Activated CD8-positive, alpha-beta T cell treated with anti-CD3 and anti-CD28 coated beads, Interleukin-2, amount 10 ng/mL, durations not matched to agents 7 days and 5 days (primary cell): ENCODE measurements at regions of chr1 and their contacts with region 1.

Region 1: GRCh38 chr1:26417111-26417759 is 6.6 kb downstream of the LIN28A start:
- DNase-seq: peak; percentile 91
- ATAC-seq: peak; percentile 100
- H3K4me3 Mint-ChIP-seq: no peak overlapping the region
- H3K27ac Mint-ChIP-seq: no peak overlapping the region
- H3K4me1 Mint-ChIP-seq: peaks cover 7% of the 10 kb centered on the region
- H3K27me3 Mint-ChIP-seq: peaks cover 49% of the 10 kb centered on the region

Region 2: DNA sequence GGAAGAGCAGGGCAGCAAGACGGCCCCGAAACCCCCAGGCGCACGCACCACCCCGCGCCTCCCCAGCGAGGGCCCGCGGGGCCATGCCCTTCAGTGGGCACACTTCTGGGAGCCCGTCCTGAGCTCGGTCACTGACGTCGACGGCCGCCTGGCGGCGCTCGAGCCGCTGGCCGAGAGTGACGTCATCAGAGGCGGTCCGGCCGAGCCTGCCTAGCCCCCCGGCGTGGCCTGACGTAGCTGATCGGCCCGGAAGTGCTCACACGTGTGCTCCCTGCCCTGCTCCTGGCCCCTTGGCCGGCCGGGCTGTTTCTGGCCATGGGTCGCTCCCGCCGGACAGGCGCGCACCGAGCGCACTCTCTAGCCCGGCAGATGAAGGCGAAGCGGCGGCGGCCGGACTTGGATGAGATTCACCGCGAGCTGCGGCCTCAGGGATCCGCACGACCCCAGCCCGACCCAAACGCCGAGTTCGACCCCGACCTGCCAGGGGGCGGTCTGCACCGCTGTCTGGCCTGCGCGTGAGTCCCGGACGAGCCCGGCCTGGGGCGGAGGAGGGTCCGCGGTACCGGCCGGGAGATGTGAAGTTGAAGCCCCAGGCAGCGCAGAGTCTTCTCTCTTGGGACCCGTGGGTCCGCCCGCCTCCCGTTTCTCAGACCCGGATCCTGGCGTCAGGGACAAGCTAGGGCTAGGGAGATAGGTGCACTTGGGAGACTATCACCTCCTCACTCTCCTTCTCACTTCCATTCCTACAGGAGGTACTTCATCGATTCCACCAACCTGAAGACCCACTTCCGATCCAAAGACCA is 247.4 kb before region 1 on chr1 and contains the start of gene ZNF593:
- CTCF ChIA-PET with region 1: interaction called, 10 read pairs
- POLR2A ChIA-PET with region 1: no interaction called
- DNase-seq: peak; percentile 92
- ATAC-seq: peak; percentile 95
- H3K4me3 Mint-ChIP-seq: peak within 1 kb of the TSS; percentile 89
- H3K27ac Mint-ChIP-seq: peak within 1 kb of the TSS; percentile 89
- H3K4me1 Mint-ChIP-seq: peaks cover 25% of the 10 kb centered on the region
- H3K27me3 Mint-ChIP-seq: peaks cover 9% of the 10 kb centered on the region
- total RNA-seq, gene ZNF593: 28.4 to 31.1 TPM

Region 3: DNA sequence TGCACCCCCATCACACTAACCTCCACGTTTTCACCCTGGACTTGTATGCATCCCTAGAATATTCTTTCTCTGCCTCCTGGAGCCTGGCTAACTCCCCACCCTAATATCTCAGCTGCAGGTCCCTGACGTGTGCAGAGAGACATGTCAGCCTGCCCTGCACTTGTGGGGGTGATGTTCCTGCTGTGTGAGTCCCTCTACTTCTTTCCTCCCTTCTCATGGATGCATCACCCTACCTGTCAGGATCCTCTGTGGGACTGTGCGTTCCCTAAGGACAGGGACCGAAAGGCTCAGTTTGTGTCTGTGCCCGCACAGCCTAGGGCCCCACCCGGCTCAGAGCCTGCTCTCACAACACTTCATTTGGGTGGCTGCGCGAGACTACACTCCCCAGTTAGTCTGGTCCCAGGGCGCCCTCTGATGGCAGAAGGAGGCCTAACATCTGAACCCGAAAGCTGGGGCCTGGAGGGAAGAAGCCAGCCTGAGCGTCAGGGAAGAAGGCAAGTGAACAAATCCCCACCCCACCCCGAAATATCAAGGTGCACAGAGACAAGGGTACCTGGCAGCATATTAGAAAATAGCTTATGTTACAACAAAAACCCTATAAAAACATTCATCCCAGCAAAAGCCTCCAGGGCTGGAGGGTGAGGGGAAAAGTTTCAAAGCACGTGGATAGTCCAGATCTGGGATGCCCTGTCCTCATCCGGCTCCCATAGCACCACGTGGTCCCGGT is 95.8 kb before region 1 on chr1:
- CTCF ChIA-PET with region 1: interaction called, 20 read pairs
- POLR2A ChIA-PET with region 1: interaction called, 3 read pairs
- DNase-seq: peak; percentile 97
- ATAC-seq: peak; percentile 76
- H3K4me3 Mint-ChIP-seq: peak overlapping the region; percentile 84
- H3K27ac Mint-ChIP-seq: peak overlapping the region; percentile 94
- H3K4me1 Mint-ChIP-seq: peaks cover 49% of the 10 kb centered on the region
- H3K27me3 Mint-ChIP-seq: no peaks in the 10 kb centered on the region

Region 4: DNA sequence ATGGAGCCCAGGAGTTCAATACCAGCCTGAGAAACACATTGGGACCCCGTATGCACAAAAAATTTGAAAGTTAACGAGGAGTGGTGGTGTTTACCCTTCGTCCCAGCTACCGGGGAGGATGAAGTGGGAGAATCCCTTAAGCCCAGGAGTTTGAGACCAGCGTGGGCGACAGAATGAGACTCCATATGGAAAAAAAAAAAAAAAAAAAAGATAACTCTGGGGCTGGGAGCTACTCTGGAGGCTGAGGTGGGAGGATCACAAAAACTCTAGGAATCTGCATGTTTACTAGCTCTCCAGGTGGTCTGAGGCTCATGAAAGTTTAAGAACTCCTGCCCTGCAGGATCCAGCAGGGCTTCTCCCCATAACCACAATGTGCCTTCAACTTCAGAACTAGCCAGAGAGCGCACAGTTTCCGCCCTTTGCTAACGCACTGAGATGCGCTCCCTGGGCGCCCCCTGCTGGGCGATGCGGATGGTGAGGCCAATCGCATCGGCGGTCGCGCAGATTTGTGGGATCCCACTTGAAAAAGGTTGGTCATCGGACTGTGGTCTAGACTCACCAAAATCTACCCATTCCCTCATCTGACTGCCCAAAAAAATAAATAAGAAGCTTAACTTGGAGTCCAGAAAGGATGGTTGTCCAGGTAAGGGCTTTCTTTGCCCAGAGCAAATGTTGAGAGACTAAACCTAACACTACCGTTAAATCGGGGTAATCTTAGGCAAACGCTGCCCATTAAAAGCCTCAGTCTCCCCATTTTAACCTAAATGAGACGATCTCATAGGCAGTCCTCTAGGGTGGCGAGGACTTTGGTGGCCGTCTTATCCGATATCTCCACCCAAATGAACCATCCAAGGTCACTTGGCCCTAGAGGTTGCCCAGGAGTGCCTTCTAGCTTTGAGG is 53.4 kb before region 1 on chr1:
- CTCF ChIA-PET with region 1: interaction called, 48 read pairs
- POLR2A ChIA-PET with region 1: no interaction called
- DNase-seq: peak; percentile 93
- ATAC-seq: peak; percentile 76
- H3K4me3 Mint-ChIP-seq: peak overlapping the region; percentile 58
- H3K27ac Mint-ChIP-seq: peak overlapping the region; percentile 70
- H3K4me1 Mint-ChIP-seq: peaks cover 78% of the 10 kb centered on the region
- H3K27me3 Mint-ChIP-seq: peaks cover 11% of the 10 kb centered on the region

Region 5: GRCh38 chr1:26378088-26378878 is 39.0 kb before region 1 on chr1:
- CTCF ChIA-PET with region 1: interaction called, 34 read pairs
- POLR2A ChIA-PET with region 1: no interaction called
- DNase-seq: peak; percentile 93
- ATAC-seq: peak; percentile 95
- H3K4me3 Mint-ChIP-seq: peak overlapping the region; percentile 58
- H3K27ac Mint-ChIP-seq: peak overlapping the region; percentile 97
- H3K4me1 Mint-ChIP-seq: peaks cover 81% of the 10 kb centered on the region
- H3K27me3 Mint-ChIP-seq: no peaks in the 10 kb centered on the region

Region 6: DNA sequence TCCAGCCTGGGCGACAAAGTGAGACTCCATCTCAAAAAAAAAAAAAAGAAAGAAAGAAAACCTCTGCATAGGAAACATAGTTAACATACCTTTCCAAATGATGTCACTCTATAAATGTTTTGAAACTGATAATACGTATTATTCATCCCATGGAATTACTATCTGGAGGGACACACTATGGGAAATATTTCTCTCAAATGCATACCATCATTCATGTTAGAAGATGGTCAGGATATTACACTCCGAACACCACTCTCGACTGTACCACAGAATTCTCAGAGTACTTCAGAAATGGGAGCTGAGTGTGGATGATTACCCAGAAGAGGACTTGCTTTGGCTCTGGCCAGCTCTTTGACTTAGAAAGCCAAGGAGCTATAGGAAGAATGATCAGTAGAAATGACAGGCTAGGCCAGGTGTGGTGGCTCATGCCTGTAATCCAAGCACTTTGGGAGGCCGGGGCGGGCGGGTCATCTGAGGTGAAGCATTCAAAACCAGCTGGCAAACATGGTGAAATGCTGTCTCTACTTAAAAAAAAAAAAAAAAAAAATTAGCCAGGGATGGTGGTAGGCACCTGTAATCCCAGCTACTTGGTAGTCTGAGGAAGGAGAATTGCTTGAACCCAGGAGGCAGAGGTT is 11.8 kb before region 1 on chr1:
- CTCF ChIA-PET with region 1: interaction called, 39 read pairs
- POLR2A ChIA-PET with region 1: no interaction called
- DNase-seq: no peak
- ATAC-seq: no peak
- H3K4me3 Mint-ChIP-seq: no peak overlapping the region
- H3K27ac Mint-ChIP-seq: no peak overlapping the region
- H3K4me1 Mint-ChIP-seq: peaks cover 16% of the 10 kb centered on the region
- H3K27me3 Mint-ChIP-seq: peaks cover 32% of the 10 kb centered on the region

Region 7: DNA sequence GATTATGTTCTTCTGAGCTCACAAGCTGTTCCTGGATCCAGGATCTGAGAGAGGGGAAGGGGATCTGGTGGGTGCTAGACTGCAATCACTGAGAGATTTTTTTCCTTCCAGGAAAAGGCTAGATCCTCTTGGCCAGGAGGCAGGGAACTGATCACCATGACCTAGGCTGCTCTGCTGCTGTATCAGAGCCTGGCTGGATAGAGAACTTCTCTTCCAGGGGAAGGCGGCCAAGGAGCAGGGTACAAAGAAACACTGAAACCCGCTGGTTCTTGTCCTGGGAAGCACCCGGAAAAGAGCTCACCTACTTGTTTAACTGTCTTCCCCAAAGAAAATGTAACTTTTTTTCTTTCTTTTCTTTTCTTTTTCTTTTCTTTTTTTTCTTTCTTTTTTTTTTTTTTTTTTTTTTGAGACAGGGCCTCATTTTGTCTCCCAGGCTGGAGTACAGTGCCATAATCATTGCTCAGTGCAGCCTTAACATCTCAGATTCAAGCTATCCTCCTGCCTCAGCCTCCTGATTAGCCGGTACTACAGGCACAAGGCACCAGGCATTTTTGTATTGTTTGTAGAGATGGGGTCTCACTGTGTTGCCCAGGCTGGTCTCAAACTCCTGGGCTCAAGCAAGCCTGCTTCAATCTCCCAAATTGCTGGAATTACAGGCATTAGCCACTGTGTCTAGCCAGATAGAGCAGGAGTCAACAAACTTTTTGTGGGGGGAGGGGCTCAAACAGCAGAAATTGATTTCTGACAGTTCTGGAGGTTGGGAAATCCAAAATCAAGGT is 99.9 kb after region 1 on chr1:
- CTCF ChIA-PET with region 1: no interaction called
- POLR2A ChIA-PET with region 1: no interaction called
- DNase-seq: no peak
- ATAC-seq: no peak
- H3K4me3 Mint-ChIP-seq: no peak overlapping the region
- H3K27ac Mint-ChIP-seq: no peak overlapping the region
- H3K4me1 Mint-ChIP-seq: no peaks in the 10 kb centered on the region
- H3K27me3 Mint-ChIP-seq: peaks cover 6% of the 10 kb centered on the region